Aorta (tissue), 5 donors: ENCODE measurements at regions of chr20 and their contacts with region 1.

Region 1: GRCh38 chr20:42628683-42629082 is 561.0 kb downstream of the PTPRT start:
- DNase-seq: no peak
- ATAC-seq: no peak
- H3K4me3 ChIP-seq: no peak overlapping the region
- H3K27ac ChIP-seq: no peak overlapping the region
- H3K4me1 ChIP-seq: no peaks in the 10 kb centered on the region
- H3K27me3 ChIP-seq: no peaks in the 10 kb centered on the region

Region 2: DNA sequence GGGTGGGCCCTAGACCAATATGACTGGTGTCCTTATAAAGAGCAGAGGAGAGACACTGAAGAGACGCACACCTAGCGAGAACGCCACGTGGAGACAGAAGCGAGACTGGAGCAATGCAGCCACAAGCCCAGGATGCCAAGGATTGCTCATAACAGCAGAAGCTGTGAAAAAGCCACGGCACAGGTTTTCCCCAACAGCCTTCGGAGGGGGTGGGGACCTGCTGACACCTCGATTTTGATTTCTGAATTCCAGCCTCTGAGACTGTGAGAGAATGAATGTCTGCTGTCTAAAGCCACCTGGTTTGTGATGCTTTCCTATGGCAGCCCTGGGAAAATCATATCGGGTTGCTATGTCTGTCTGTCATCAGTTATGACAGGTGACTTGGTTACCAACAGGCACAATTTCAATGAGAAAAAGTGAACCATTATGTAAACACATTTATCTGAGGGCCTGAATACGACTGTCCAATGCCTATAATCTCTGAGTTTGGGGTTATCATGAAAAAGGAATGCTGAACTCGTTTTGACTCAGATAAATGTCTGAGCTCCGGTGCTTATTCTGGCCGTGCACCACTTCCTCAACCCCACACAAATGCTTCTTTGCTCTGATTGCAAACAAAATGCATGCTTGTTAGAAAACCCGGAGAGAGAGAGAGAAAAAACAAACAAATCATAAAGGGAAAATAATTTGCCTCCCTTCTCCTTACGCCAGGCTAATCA is 208.7 kb before region 1 on chr20:
- intact Hi-C with region 1: no loop called
- DNase-seq: no peak
- ATAC-seq: no peak
- H3K4me3 ChIP-seq: no peak overlapping the region
- H3K27ac ChIP-seq: no peak overlapping the region
- H3K4me1 ChIP-seq: no peaks in the 10 kb centered on the region
- H3K27me3 ChIP-seq: no peaks in the 10 kb centered on the region

Region 3: GRCh38 chr20:42641886-42642285 is 13.2 kb after region 1 on chr20:
- intact Hi-C with region 1: loop called in 1 of 2 experiments (anchors 1 kb)
- DNase-seq: no peak
- ATAC-seq: no peak
- H3K4me3 ChIP-seq: no peak overlapping the region
- H3K27ac ChIP-seq: no peak overlapping the region
- H3K4me1 ChIP-seq: no peaks in the 10 kb centered on the region
- H3K27me3 ChIP-seq: peaks cover 0 to 5% of the 10 kb centered on the region in 2 donors